OCI-LY7 (cell line): ENCODE measurements at regions of chr14 and their contacts with region 1.

Region 1: GRCh38 chr14:73825551-73826188 is 26.0 kb upstream of the PTGR2 start:
- DNase-seq: peak; percentile 86
- H3K4me3 ChIP-seq: no peak overlapping the region
- H3K27ac ChIP-seq: no peak overlapping the region
- H3K4me1 ChIP-seq: peaks cover 5% of the 10 kb centered on the region
- CTCF ChIP-seq: peak; percentile 96

Region 2: GRCh38 chr14:73503648-73504047 is 322.0 kb before region 1 on chr14:
- CTCF ChIA-PET with region 1: interaction called, 3 read pairs
- POLR2A ChIA-PET with region 1: no interaction called
- intact Hi-C with region 1: loop called (anchors 5 kb)
- DNase-seq: peak; percentile 25
- H3K4me3 ChIP-seq: no peak overlapping the region
- H3K27ac ChIP-seq: no peak overlapping the region
- H3K4me1 ChIP-seq: no peaks in the 10 kb centered on the region
- CTCF ChIP-seq: no peak

Region 3: GRCh38 chr14:73576391-73576790 is 249.3 kb before region 1 on chr14:
- CTCF ChIA-PET with region 1: no interaction called
- POLR2A ChIA-PET with region 1: no interaction called
- intact Hi-C with region 1: no loop called
- DNase-seq: no peak
- H3K4me3 ChIP-seq: no peak overlapping the region
- H3K27ac ChIP-seq: no peak overlapping the region
- H3K4me1 ChIP-seq: no peaks in the 10 kb centered on the region
- CTCF ChIP-seq: no peak

Region 4: DNA sequence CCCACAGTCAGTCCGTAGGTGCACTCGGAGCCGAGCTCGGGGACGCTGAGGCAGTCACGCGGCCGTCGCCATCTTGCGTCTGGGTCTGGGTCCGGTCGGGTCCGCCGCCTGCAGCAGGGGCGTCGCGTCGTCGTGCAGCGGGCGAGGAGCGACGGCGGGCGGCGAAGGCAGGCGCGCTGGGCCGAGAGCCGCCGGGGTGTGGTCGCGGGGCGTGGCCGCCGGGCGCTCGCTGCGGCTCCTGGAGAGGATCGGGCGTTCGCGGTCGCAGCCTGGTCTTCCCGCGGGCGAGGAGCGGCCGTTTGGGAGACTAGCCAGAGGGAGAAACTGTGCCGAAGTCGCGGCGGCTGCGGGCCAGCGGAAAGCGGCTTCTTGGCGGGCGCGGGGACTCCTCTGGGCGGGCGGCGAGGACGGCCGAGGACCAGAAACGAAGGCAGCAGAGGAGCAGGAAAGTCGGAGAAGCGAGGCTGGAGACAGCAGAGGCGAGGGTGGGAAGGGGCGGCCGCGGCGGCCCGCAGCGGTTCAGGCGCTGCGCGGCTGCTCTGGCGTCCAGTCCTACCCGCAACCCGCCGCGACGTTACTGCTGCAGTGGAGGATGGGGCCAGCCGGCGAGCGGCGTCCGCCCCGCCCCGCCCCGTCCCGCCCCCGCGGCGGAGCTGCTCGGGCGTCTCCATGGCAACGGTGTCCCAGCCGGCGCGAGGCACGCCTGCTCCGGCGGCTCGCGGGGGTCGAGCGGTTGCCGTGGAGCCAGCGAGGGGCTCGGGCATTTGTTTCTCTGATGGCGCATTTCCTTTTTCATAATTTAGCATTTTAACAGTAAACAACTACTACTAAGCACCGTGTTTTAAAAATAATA is 111.6 kb before region 1 on chr14 and contains the start of gene PNMA1:
- CTCF ChIA-PET with region 1: no interaction called
- POLR2A ChIA-PET with region 1: no interaction called
- intact Hi-C with region 1: loop called (anchors 5 kb)
- DNase-seq: peak; percentile 90
- H3K4me3 ChIP-seq: peak within 1 kb of the TSS; percentile 71
- H3K27ac ChIP-seq: peak within 1 kb of the TSS; percentile 58
- H3K4me1 ChIP-seq: peaks cover 27% of the 10 kb centered on the region
- CTCF ChIP-seq: no peak
- total RNA-seq, gene PNMA1: 5.8 and 6.0 TPM in 2 replicates

Region 5: GRCh38 chr14:73728717-73729330 is 96.8 kb before region 1 on chr14:
- CTCF ChIA-PET with region 1: interaction called, 7 read pairs
- POLR2A ChIA-PET with region 1: interaction called, 3 read pairs
- intact Hi-C with region 1: loop called (anchors 1 kb)
- DNase-seq: peak; percentile 87
- H3K4me3 ChIP-seq: no peak overlapping the region
- H3K27ac ChIP-seq: peak overlapping the region; percentile 34
- H3K4me1 ChIP-seq: peaks cover 9% of the 10 kb centered on the region
- CTCF ChIP-seq: peak; percentile 97

Region 6: GRCh38 chr14:73741386-73741875 is 84.2 kb before region 1 on chr14:
- CTCF ChIA-PET with region 1: no interaction called
- POLR2A ChIA-PET with region 1: no interaction called
- intact Hi-C with region 1: loop called (anchors 5 kb)
- DNase-seq: peak; percentile 54
- H3K4me3 ChIP-seq: peak overlapping the region; percentile 58
- H3K27ac ChIP-seq: peak overlapping the region; percentile 70
- H3K4me1 ChIP-seq: peaks cover 58% of the 10 kb centered on the region
- CTCF ChIP-seq: no peak

Region 7: GRCh38 chr14:73785873-73786695 is 39.6 kb before region 1 on chr14:
- CTCF ChIA-PET with region 1: no interaction called
- POLR2A ChIA-PET with region 1: no interaction called
- intact Hi-C with region 1: loop called (anchors 1 kb)
- DNase-seq: peak; percentile 83
- H3K4me3 ChIP-seq: peak overlapping the region; percentile 72
- H3K27ac ChIP-seq: peak overlapping the region; percentile 80
- H3K4me1 ChIP-seq: peaks cover 61% of the 10 kb centered on the region
- CTCF ChIP-seq: 0 out of 2 replicates have a peak, but pooled peaks have one; percentile 29